CD4-positive, alpha-beta T cell (primary cell): ENCODE measurements at regions of chr4 and their contacts with region 1.

Region 1: DNA sequence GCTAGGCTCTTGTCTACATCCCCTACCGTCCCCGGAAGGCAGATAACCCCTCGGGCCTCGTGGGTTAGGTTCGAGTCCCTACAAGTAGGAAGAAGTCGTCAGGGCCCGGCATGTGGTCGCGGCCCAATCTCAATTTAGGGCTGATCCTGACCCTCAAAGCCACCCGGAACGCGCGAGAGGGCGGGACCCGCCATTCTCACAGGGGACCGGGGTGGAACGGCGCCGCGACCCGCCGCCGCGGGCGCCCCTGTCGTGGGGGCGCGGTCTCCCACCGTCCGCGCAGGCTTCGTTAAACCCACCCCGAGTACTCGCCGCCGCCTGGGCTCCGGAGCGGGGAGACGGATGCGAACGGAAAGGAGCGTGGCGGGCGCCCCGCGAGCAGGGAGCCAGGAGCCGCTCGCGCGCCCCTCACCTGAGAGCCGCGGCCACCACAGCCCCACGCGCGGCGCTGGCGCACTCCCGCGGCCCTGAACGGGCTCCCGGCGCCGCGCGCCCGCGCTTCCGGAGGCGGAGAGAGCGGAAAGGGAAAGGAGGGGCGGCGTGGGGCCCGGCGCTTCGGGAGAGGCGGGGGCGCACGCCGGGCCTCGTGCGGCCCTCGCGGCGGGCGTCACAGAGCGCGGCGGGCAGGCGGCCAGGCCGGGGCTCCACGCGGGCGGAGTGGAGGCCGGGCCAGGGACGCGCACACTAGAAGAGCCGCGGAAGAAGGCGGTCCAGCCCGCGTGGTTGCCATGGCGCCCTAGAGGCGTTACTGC is at the start of gene CFAP97:
- DNase-seq: peak; percentile 59 to 96 (median 76)
- ATAC-seq: peak; percentile 79
- H3K4me3 ChIP-seq: peak within 1 kb of the TSS; percentile 76
- H3K4me3 Mint-ChIP-seq: peak within 1 kb of the TSS; percentile 98
- H3K27ac ChIP-seq: peak within 1 kb of the TSS; percentile 89 to 90
- H3K27ac Mint-ChIP-seq: peak within 1 kb of the TSS; percentile 89
- H3K4me1 ChIP-seq: peaks cover 42% of the 10 kb centered on the region
- H3K4me1 Mint-ChIP-seq: peaks cover 60% of the 10 kb centered on the region
- H3K27me3 ChIP-seq: no peaks in the 10 kb centered on the region
- H3K27me3 Mint-ChIP-seq: no peaks in the 10 kb centered on the region
- CTCF ChIP-seq: no peak
- total RNA-seq, gene CFAP97: 24.5 to 26.6 TPM

Region 2: DNA sequence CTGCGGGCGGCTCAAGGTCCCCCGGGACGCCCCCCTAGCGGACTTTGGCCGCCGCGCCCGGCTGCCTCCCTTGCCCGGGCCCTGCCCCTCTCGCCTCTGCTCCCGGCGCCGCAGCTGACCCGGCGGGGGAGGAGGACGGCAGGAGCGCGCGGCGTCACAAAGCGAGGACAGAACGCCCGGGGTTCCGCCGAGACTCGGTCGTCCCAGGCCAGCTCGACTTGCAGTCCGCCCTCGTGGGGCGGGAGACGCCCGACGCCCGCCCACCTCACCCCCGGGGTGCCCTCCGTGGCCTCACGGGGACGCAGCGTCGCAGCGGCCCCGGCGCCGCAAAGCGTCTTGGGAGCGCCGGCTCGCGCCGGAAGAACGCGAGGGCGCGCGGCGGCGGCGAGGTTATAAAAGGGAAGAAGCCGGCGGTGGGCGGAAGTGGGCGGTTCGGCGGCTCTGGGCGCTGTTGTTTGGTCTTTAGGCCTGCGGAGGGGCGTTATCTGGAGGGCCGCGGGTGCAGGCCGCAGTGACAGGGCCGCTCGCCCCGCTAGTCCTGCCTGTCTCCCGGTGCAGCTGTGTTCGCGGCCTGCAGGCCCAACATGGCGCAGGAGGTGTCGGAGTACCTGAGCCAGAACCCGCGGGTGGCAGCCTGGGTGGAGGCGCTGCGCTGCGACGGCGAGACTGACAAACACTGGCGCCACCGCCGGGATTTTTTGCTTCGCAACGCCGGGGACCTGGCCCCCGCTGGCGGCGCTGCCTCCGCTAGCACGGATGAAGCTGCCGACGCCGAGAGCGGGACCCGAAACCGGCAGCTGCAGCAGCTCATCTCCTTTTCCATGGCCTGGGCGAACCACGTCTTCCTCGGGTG is 1759.2 kb before region 1 on chr4 and contains the start of gene CDKN2AIP:
- CTCF ChIA-PET with region 1: no interaction called
- POLR2A ChIA-PET with region 1: no interaction called
- intact Hi-C with region 1: loop called in 1 of 2 experiments (anchors 10 kb)
- DNase-seq: peak; percentile 89 to 98 (median 94)
- ATAC-seq: peak; percentile 82
- H3K4me3 ChIP-seq: peak within 1 kb of the TSS; percentile 94
- H3K4me3 Mint-ChIP-seq: peak within 1 kb of the TSS; percentile 98
- H3K27ac ChIP-seq: peak within 1 kb of the TSS; percentile 91
- H3K27ac Mint-ChIP-seq: peak within 1 kb of the TSS; percentile 96
- H3K4me1 ChIP-seq: peaks cover 26% of the 10 kb centered on the region
- H3K4me1 Mint-ChIP-seq: peaks cover 55% of the 10 kb centered on the region
- H3K27me3 ChIP-seq: no peaks in the 10 kb centered on the region
- H3K27me3 Mint-ChIP-seq: no peaks in the 10 kb centered on the region
- CTCF ChIP-seq: no peak
- total RNA-seq, gene CDKN2AIP: 55.7 to 56.9 TPM

Region 3: GRCh38 chr4:183830438-183830985 is 1373.2 kb before region 1 on chr4:
- CTCF ChIA-PET with region 1: no interaction called
- POLR2A ChIA-PET with region 1: no interaction called
- intact Hi-C with region 1: no loop called
- DNase-seq: peak in 2 of 14 experiments; percentile 25 to 39
- ATAC-seq: no peak
- H3K4me3 ChIP-seq: no peak overlapping the region
- H3K4me3 Mint-ChIP-seq: no peak overlapping the region
- H3K27ac ChIP-seq: no peak overlapping the region
- H3K27ac Mint-ChIP-seq: no peak overlapping the region
- H3K4me1 ChIP-seq: peaks cover 3% of the 10 kb centered on the region
- H3K4me1 Mint-ChIP-seq: peaks cover 18% of the 10 kb centered on the region
- H3K27me3 ChIP-seq: no peaks in the 10 kb centered on the region
- H3K27me3 Mint-ChIP-seq: no peaks in the 10 kb centered on the region
- CTCF ChIP-seq: no peak

Region 4: DNA sequence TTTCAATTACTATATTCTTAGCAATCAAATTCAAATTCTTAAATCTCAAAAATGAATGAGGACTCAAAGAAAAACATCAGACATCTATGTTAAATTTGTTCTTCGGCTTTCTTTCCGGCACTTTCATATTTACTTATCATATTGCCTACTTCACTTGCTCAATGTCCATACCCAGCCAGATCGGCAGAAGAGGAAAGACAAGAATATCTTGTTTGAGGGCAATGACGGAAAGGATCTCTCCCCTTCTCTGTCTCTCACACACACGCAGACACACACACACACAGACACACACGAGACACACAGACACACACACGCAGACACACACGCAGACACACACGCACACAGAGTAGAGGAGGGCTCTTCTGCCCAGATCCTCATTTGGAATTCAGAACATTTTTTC is 716.1 kb before region 1 on chr4:
- CTCF ChIA-PET with region 1: no interaction called
- POLR2A ChIA-PET with region 1: no interaction called
- intact Hi-C with region 1: no loop called
- DNase-seq: no peak
- ATAC-seq: no peak
- H3K4me3 ChIP-seq: no peak overlapping the region
- H3K4me3 Mint-ChIP-seq: no peak overlapping the region
- H3K27ac ChIP-seq: no peak overlapping the region
- H3K27ac Mint-ChIP-seq: no peak overlapping the region
- H3K4me1 ChIP-seq: no peaks in the 10 kb centered on the region
- H3K4me1 Mint-ChIP-seq: peaks cover 9% of the 10 kb centered on the region
- H3K27me3 ChIP-seq: no peaks in the 10 kb centered on the region
- H3K27me3 Mint-ChIP-seq: no peaks in the 10 kb centered on the region
- CTCF ChIP-seq: no peak

Region 5: DNA sequence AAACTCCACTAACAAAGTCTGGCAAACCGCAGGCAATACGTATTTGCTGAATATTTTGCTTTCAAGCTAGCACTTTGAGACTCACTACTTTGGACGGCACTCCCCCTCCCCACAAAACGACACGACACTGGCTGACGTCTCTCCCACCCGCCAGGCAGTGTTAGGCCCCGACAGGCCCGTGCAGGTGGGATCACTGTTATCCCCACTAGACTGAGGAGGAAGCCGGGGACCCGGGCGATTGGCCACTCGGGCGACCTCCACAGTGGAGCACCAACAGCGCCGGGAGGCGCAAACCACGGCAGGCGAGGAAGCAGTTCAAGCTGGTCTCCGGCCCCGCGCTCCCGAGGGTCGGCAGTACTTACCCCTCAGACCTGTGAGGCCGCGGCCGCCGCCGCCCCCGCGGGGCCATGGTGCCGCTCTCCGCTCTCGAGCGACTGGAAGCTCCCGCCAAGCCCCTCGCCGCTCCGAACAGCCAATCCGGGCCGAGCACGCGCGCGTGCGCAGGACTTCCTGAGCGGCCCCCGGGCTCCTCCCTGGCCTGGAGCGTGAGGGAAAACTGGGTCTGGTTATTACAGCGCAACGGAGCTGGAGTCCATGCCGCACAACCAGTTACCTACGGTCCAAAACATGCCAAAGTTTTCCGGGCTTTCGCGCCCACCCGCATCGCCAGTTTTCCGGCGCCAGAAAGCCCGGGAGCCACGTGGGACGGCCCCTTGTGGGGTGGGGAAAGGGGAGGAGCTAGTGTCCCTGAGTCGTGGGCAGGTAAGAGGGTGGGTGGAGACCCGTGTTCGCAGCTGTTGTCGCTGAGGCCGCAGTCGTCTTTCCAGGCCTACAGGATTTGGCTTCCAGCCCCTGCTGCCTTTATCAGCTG is 469.8 kb before region 1 on chr4 and contains the start of gene CENPU:
- CTCF ChIA-PET with region 1: no interaction called
- POLR2A ChIA-PET with region 1: no interaction called
- intact Hi-C with region 1: loop called in 1 of 2 experiments (anchors 5 kb)
- DNase-seq: peak; percentile 91 to 98 (median 93)
- ATAC-seq: peak; percentile 97
- H3K4me3 ChIP-seq: peak within 1 kb of the TSS; percentile 87
- H3K4me3 Mint-ChIP-seq: peak within 1 kb of the TSS; percentile 93
- H3K27ac ChIP-seq: no peak within 1 kb of the TSS
- H3K27ac Mint-ChIP-seq: peak within 1 kb of the TSS; percentile 74
- H3K4me1 ChIP-seq: peaks cover 13% of the 10 kb centered on the region
- H3K4me1 Mint-ChIP-seq: peaks cover 17% of the 10 kb centered on the region
- H3K27me3 ChIP-seq: no peaks in the 10 kb centered on the region
- H3K27me3 Mint-ChIP-seq: no peaks in the 10 kb centered on the region
- CTCF ChIP-seq: no peak
- total RNA-seq, gene CENPU: 1.9 to 2.8 TPM

Region 6: DNA sequence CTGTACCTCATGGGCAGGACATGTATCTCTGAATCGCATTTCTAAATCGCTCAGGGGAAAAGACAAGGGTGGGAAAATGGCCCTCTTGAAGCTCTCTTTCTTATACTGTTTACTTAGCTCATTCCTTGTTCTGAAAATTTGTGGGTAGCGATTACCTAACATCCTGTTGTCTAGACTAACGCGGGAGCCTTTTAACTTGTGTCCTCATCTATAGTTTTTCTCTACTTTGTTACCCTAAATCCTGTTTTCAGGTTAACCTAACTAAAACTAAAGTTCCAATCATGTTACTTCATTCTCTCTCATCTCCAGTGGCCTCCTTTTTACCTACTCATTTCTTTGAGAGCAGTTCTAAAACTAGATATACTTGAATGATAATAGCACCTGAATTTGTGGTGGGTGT is 50.8 kb after region 1 on chr4:
- CTCF ChIA-PET with region 1: no interaction called
- POLR2A ChIA-PET with region 1: interaction called, 3 read pairs
- intact Hi-C with region 1: loop called in 1 of 2 experiments (anchors 5 kb)
- DNase-seq: peak in 4 of 14 experiments; percentile 15 to 85 (median 66)
- ATAC-seq: peak; percentile 79
- H3K4me3 ChIP-seq: no peak overlapping the region
- H3K4me3 Mint-ChIP-seq: peak overlapping the region; percentile 2
- H3K27ac ChIP-seq: peak overlapping the region; percentile 34 to 46
- H3K27ac Mint-ChIP-seq: peak overlapping the region; percentile 73
- H3K4me1 ChIP-seq: peaks cover 30% of the 10 kb centered on the region
- H3K4me1 Mint-ChIP-seq: peaks cover 38% of the 10 kb centered on the region
- H3K27me3 ChIP-seq: no peaks in the 10 kb centered on the region
- H3K27me3 Mint-ChIP-seq: no peaks in the 10 kb centered on the region
- CTCF ChIP-seq: no peak

Region 7: DNA sequence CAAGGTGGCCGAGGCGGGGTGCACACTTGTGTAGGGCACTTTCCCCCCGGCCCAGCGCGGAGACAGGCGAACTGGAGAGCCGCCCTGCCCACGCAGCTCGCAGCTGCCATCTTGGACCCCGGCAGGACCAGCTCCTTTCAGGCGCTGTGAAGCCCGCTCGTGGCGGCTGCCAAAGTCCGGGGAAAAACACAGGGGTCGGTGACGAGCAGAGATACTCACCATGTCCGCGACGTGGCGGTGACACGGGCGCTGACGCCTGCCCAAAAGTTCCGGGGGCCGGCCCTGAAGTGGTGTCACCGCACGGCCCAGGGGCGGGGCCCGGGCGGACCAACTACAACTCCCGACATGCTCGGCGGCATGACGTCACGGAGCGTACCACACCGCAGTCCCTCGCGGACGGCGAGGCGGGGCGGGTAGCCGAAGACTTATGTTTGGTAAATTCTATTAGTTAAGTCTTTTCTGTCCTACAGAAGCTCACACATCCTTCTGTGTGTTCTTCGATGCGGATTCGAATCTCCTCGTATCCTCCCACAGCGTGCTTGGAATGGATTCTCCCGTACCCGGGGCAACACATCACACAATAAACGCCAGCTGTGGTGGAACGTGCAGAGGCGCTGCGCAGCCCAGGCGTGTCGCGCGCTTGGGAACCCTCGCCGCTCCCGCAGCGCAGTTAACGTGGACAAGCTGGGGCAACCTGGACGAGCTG is 222.1 kb after region 1 on chr4 and contains the start of gene UFSP2:
- CTCF ChIA-PET with region 1: no interaction called
- POLR2A ChIA-PET with region 1: interaction called, 3 read pairs
- intact Hi-C with region 1: loop called (anchors 5 to 10 kb)
- DNase-seq: peak; percentile 78 to 97 (median 88)
- ATAC-seq: peak; percentile 85
- H3K4me3 ChIP-seq: peak within 1 kb of the TSS; percentile 99
- H3K4me3 Mint-ChIP-seq: peak within 1 kb of the TSS; percentile 94
- H3K27ac ChIP-seq: peak within 1 kb of the TSS; percentile 88 to 99
- H3K27ac Mint-ChIP-seq: peak within 1 kb of the TSS; percentile 91
- H3K4me1 ChIP-seq: peaks cover 18% of the 10 kb centered on the region
- H3K4me1 Mint-ChIP-seq: peaks cover 31% of the 10 kb centered on the region
- H3K27me3 ChIP-seq: no peaks in the 10 kb centered on the region
- H3K27me3 Mint-ChIP-seq: peaks cover 6% of the 10 kb centered on the region
- CTCF ChIP-seq: no peak
- total RNA-seq, gene UFSP2: 14.5 to 16.6 TPM

Region 8: GRCh38 chr4:185634066-185634652 is 430.5 kb after region 1 on chr4:
- CTCF ChIA-PET with region 1: no interaction called
- POLR2A ChIA-PET with region 1: no interaction called
- intact Hi-C with region 1: no loop called
- DNase-seq: peak in 1 of 14 experiments; percentile 2
- ATAC-seq: no peak
- H3K4me3 ChIP-seq: no peak overlapping the region
- H3K4me3 Mint-ChIP-seq: no peak overlapping the region
- H3K27ac ChIP-seq: no peak overlapping the region
- H3K27ac Mint-ChIP-seq: no peak overlapping the region
- H3K4me1 ChIP-seq: peaks cover 4% of the 10 kb centered on the region
- H3K4me1 Mint-ChIP-seq: no peaks in the 10 kb centered on the region
- H3K27me3 ChIP-seq: peaks cover 14 to 25% of the 10 kb centered on the region in 2 experiments
- H3K27me3 Mint-ChIP-seq: peaks cover 38% of the 10 kb centered on the region
- CTCF ChIP-seq: peak; percentile 27

Region 9: DNA sequence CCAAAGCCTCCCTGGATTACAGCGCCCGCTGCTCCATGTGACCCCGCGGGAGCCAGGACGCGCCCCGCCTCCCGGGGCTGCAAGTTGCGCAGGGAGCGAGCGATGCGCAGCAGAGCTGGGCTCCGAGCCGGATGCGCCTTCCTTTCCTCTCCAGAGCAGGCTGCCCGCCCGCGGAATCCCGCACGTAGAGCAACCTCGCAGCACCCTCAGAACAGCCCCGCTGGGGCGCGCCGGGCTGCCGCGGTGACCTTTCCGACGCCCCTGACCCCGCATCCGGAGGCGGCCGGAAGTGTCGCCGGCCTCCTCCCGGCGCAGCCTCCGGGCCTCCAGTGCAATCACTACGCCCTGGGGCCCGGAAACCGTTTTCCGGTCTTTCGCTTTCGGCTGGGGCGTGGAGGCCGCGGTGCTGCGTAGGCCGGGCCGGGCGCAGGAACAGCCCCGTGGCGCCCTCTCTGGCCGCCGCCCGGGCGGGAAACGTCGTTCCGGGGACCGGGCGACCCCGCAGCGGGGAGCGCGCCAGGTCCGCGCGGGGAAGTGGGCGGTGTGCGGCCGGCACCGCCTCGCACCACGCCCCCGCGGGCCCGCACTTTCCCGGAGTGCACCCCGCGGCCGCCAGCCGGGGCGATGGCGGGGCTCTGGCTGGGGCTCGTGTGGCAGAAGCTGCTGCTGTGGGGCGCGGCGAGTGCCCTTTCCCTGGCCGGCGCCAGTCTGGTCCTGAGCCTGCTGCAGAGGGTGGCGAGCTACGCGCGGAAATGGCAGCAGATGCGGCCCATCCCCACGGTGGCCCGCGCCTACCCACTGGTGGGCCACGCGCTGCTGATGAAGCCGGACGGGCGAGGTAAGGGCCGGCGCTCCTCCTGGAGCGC is 987.8 kb after region 1 on chr4 and contains the start of gene CYP4V2:
- CTCF ChIA-PET with region 1: no interaction called
- POLR2A ChIA-PET with region 1: no interaction called
- intact Hi-C with region 1: loop called in 1 of 2 experiments (anchors 10 kb)
- DNase-seq: peak; percentile 72 to 94 (median 84)
- ATAC-seq: peak; percentile 74
- H3K4me3 ChIP-seq: peak within 1 kb of the TSS; percentile 86
- H3K4me3 Mint-ChIP-seq: peak within 1 kb of the TSS; percentile 96
- H3K27ac ChIP-seq: peak within 1 kb of the TSS; percentile 83 to 88
- H3K27ac Mint-ChIP-seq: peak within 1 kb of the TSS; percentile 97
- H3K4me1 ChIP-seq: peaks cover 24% of the 10 kb centered on the region
- H3K4me1 Mint-ChIP-seq: peaks cover 62% of the 10 kb centered on the region
- H3K27me3 ChIP-seq: no peaks in the 10 kb centered on the region
- H3K27me3 Mint-ChIP-seq: no peaks in the 10 kb centered on the region
- CTCF ChIP-seq: peak; percentile 27
- total RNA-seq, gene CYP4V2: 12.7 to 12.8 TPM